ENCODE measurements at regions of chr5 and their contacts with region 1.

Region 1: GRCh38 chr5:108168915-108169314 is 213.0 kb downstream of the FBXL17 start:
- DNase-seq: peak; percentile 10
- H3K4me3 ChIP-seq: no peak overlapping the region
- H3K27ac ChIP-seq: no peak overlapping the region
- H3K4me1 ChIP-seq: peaks cover 6% of the 10 kb centered on the region
- H3K27me3 ChIP-seq: no peaks in the 10 kb centered on the region
- CTCF ChIP-seq: no peak

Region 2: DNA sequence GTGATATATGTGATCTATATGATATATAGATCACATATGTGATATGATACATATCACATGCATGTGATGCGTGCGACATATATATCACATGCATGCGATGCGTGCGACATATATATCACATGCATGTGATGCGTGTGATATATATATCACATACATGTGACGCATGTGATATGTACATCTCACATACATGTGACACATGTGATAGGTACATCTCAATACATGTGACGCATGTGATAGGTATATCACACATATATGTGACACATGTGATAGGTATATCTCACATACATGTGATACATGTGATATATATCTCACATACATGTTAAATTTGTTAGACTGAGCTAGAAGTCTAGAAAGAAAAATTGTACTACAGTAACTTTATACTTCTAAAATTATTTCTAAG is 1594.1 kb before region 1 on chr5:
- CTCF ChIA-PET with region 1: no interaction called
- POLR2A ChIA-PET with region 1: interaction called, 16 read pairs
- intact Hi-C with region 1: no loop called
- DNase-seq: no peak
- H3K4me3 ChIP-seq: no peak overlapping the region
- H3K27ac ChIP-seq: no peak overlapping the region
- H3K4me1 ChIP-seq: no peaks in the 10 kb centered on the region
- H3K27me3 ChIP-seq: no peaks in the 10 kb centered on the region
- CTCF ChIP-seq: no peak

Region 3: DNA sequence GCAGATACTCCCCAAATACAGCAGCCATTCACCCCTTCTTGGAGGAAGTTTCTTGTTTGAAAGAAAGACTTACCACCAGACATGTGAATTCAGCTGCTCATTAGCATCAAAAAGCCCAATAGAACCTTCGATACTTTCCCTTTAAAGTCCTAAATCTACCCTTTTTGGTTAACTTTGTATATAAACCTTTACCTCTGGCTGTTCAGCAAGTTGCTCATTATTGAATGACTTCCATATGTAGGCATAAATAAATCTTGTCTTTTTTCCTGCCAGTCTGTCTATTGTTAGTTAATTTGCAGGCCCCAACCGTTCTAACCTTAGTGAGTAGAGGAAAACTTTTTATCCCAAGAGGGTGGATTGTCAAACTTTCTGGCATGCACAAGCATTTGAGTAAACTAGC is 240.9 kb after region 1 on chr5:
- CTCF ChIA-PET with region 1: no interaction called
- POLR2A ChIA-PET with region 1: no interaction called
- intact Hi-C with region 1: no loop called
- DNase-seq: no peak
- H3K4me3 ChIP-seq: no peak overlapping the region
- H3K27ac ChIP-seq: no peak overlapping the region
- H3K4me1 ChIP-seq: no peaks in the 10 kb centered on the region
- H3K27me3 ChIP-seq: no peaks in the 10 kb centered on the region
- CTCF ChIP-seq: no peak